ENCODE measurements at regions of chr9 and their contacts with region 1.

Region 1: GRCh38 chr9:14466429-14466818 is 152.5 kb upstream of the NFIB start:
- DNase-seq: no peak
- H3K4me3 Mint-ChIP-seq: no peak overlapping the region
- H3K27ac Mint-ChIP-seq: no peak overlapping the region
- H3K4me1 Mint-ChIP-seq: no peaks in the 10 kb centered on the region
- H3K27me3 Mint-ChIP-seq: no peaks in the 10 kb centered on the region

Region 2: GRCh38 chr9:14768405-14769229 is 302.2 kb after region 1 on chr9:
- CTCF ChIA-PET with region 1: no interaction called
- POLR2A ChIA-PET with region 1: no interaction called
- intact Hi-C with region 1: loop called (anchors 1 kb)
- DNase-seq: no peak
- H3K4me3 Mint-ChIP-seq: no peak overlapping the region
- H3K27ac Mint-ChIP-seq: no peak overlapping the region
- H3K4me1 Mint-ChIP-seq: no peaks in the 10 kb centered on the region
- H3K27me3 Mint-ChIP-seq: peaks cover 12% of the 10 kb centered on the region

Measured in activated CD4-positive, alpha-beta memory T cell treated with anti-CD3 and anti-CD28 coated beads for 36 hours (primary cell).